HepG2 (cell line): ENCODE measurements at regions of chr7 and their contacts with region 1.

Region 1: GRCh38 chr7:122803323-122803722 is 82.9 kb downstream of the CADPS2 start:
- DNase-seq: peak; percentile 36
- ATAC-seq: peak; percentile 69; the same call in 2 of the 3 replicates
- H3K4me3 ChIP-seq: no peak overlapping the region
- H3K27ac ChIP-seq: no peak overlapping the region
- H3K4me1 ChIP-seq: peaks cover 13% of the 10 kb centered on the region
- H3K27me3 ChIP-seq: no peaks in the 10 kb centered on the region
- CTCF ChIP-seq: peak; percentile 71
- EP300 ChIP-seq: no peak
- POLR2A ChIP-seq: no peak
- RAD21 ChIP-seq: peak; percentile 51; the same call in 1 of the 2 replicates

Region 2: GRCh38 chr7:122092964-122093797 is 710.1 kb before region 1 on chr7:
- CTCF ChIA-PET with region 1: no interaction called
- POLR2A ChIA-PET with region 1: no interaction called
- in situ Hi-C with region 1: no loop called
- intact Hi-C with region 1: no loop called
- DNase-seq: peak; percentile 64
- ATAC-seq: peak; percentile 83
- H3K4me3 ChIP-seq: no peak overlapping the region
- H3K27ac ChIP-seq: no peak overlapping the region
- H3K4me1 ChIP-seq: no peaks in the 10 kb centered on the region
- H3K27me3 ChIP-seq: no peaks in the 10 kb centered on the region
- CTCF ChIP-seq: peak; percentile 75
- EP300 ChIP-seq: no peak
- POLR2A ChIP-seq: no peak
- RAD21 ChIP-seq: no peak

Region 3: DNA sequence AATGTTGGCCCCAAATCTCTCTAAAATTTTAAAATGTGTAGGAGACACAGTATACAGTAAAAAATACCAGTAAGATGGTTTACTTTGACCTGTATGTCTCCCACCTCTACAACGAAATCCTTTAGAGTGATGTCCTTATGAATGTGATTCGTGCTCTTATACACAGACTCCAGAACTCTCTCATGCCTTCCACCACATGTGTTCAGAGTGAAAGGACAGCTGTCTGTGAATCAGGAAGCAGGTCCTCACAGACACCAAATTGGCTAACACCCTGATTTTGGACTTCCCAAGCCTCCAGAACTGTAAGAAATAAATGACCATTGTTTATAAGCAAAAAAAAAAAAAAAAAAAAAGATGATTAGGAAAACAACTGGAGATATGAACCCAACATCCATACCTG is 139.6 kb before region 1 on chr7:
- CTCF ChIA-PET with region 1: no interaction called
- POLR2A ChIA-PET with region 1: no interaction called
- in situ Hi-C with region 1: no loop called
- intact Hi-C with region 1: no loop called
- DNase-seq: no peak
- ATAC-seq: no peak
- H3K4me3 ChIP-seq: no peak overlapping the region
- H3K27ac ChIP-seq: no peak overlapping the region
- H3K4me1 ChIP-seq: no peaks in the 10 kb centered on the region
- H3K27me3 ChIP-seq: no peaks in the 10 kb centered on the region
- CTCF ChIP-seq: no peak
- EP300 ChIP-seq: no peak
- POLR2A ChIP-seq: no peak
- RAD21 ChIP-seq: no peak

Region 4: DNA sequence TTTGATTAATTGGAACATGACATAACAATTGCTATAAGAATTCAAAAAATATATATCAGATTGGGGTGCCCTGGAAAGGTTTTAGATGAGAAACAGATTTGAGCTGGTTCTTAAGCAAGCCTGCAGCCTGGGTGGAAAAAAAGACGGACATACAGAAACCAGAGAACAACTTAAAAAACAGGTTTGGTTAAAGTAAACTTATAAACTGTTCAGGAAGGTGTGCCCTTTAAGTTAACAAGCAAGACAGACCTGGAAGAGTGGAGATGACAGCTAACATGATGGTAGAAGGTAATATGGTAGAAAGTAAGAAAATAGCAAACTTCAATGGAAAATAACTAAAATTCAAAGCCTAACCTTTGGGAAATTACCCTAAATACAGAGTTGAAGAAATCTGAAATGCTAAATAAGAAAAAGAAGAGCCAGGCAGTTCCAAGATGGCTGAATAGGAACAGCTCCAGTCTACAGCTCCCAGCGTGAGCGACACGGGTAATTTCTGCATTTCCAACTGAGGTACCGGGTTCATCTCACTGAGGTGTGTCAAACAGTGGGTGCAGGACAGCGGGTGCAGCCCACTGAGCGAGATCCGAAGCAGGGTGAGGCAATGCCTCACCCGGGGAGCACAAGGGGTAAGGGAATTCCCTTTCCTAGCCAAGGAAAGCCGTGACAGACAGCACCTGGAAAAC is 30.7 kb after region 1 on chr7:
- CTCF ChIA-PET with region 1: no interaction called
- POLR2A ChIA-PET with region 1: no interaction called
- in situ Hi-C with region 1: no loop called
- intact Hi-C with region 1: no loop called
- DNase-seq: no peak
- ATAC-seq: peak; percentile 72
- H3K4me3 ChIP-seq: peak overlapping the region; percentile 29 to 52 (median 33); a peak in 5 of 6 replicates
- H3K27ac ChIP-seq: peak overlapping the region; percentile 22
- H3K4me1 ChIP-seq: peaks cover 15% of the 10 kb centered on the region
- H3K27me3 ChIP-seq: no peaks in the 10 kb centered on the region
- CTCF ChIP-seq: no peak
- EP300 ChIP-seq: no peak
- POLR2A ChIP-seq: no peak
- RAD21 ChIP-seq: no peak

Region 5: GRCh38 chr7:123054357-123055130 is 251.2 kb after region 1 on chr7:
- CTCF ChIA-PET with region 1: no interaction called
- POLR2A ChIA-PET with region 1: no interaction called
- in situ Hi-C with region 1: no loop called
- intact Hi-C with region 1: loop called (anchors 5 kb)
- DNase-seq: peak; percentile 29
- ATAC-seq: peak; percentile 84
- H3K4me3 ChIP-seq: no peak overlapping the region
- H3K27ac ChIP-seq: no peak overlapping the region
- H3K4me1 ChIP-seq: no peaks in the 10 kb centered on the region
- H3K27me3 ChIP-seq: no peaks in the 10 kb centered on the region
- CTCF ChIP-seq: peak; percentile 59
- EP300 ChIP-seq: no peak
- POLR2A ChIP-seq: no peak
- RAD21 ChIP-seq: no peak